CD4-positive, alpha-beta T cell (primary cell): ENCODE measurements at regions of chr10 and their contacts with region 1.

Region 1: DNA sequence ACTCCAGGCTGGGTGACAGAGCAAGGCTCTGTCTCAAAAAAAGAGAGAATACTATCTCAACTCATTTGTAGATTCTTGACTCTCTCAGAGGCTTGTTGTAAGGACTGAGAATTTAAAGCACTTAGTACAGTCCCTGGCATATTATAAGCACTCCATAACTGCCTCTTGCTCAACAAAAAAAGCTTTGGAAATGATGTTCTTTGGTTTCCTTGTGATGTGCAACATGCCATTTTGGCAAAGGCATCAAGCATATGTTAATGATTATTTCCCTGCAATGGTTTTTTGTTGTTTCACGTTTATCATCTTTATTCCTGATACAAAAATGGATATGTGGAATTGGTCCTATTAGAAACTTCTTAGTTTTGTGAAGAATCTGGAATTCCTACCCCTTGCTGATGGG is 15.7 kb downstream of the NOLC1 start:
- DNase-seq: no peak
- ATAC-seq: no peak
- H3K4me3 ChIP-seq: no peak overlapping the region
- H3K4me3 Mint-ChIP-seq: no peak overlapping the region
- H3K27ac ChIP-seq: no peak overlapping the region
- H3K27ac Mint-ChIP-seq: no peak overlapping the region
- H3K4me1 ChIP-seq: peaks cover 10% of the 10 kb centered on the region
- H3K4me1 Mint-ChIP-seq: peaks cover 8% of the 10 kb centered on the region
- H3K27me3 ChIP-seq: no peaks in the 10 kb centered on the region
- H3K27me3 Mint-ChIP-seq: peaks cover 4% of the 10 kb centered on the region
- CTCF ChIP-seq: no peak

Region 2: GRCh38 chr10:102583435-102584417 is 415.9 kb after region 1 on chr10:
- CTCF ChIA-PET with region 1: interaction called, 12 read pairs
- POLR2A ChIA-PET with region 1: interaction called, 3 read pairs
- intact Hi-C with region 1: loop called (anchors 1 to 5 kb)
- DNase-seq: peak; percentile 71 to 90 (median 78)
- ATAC-seq: peak; percentile 99
- H3K4me3 ChIP-seq: no peak overlapping the region
- H3K4me3 Mint-ChIP-seq: no peak overlapping the region
- H3K27ac ChIP-seq: no peak overlapping the region
- H3K27ac Mint-ChIP-seq: peak overlapping the region; percentile 28
- H3K4me1 ChIP-seq: peaks cover 10% of the 10 kb centered on the region
- H3K4me1 Mint-ChIP-seq: peaks cover 16% of the 10 kb centered on the region
- H3K27me3 ChIP-seq: no peaks in the 10 kb centered on the region
- H3K27me3 Mint-ChIP-seq: no peaks in the 10 kb centered on the region
- CTCF ChIP-seq: peak; percentile 90